ENCODE measurements at regions of chr11 and their contacts with region 1.

Region 1: DNA sequence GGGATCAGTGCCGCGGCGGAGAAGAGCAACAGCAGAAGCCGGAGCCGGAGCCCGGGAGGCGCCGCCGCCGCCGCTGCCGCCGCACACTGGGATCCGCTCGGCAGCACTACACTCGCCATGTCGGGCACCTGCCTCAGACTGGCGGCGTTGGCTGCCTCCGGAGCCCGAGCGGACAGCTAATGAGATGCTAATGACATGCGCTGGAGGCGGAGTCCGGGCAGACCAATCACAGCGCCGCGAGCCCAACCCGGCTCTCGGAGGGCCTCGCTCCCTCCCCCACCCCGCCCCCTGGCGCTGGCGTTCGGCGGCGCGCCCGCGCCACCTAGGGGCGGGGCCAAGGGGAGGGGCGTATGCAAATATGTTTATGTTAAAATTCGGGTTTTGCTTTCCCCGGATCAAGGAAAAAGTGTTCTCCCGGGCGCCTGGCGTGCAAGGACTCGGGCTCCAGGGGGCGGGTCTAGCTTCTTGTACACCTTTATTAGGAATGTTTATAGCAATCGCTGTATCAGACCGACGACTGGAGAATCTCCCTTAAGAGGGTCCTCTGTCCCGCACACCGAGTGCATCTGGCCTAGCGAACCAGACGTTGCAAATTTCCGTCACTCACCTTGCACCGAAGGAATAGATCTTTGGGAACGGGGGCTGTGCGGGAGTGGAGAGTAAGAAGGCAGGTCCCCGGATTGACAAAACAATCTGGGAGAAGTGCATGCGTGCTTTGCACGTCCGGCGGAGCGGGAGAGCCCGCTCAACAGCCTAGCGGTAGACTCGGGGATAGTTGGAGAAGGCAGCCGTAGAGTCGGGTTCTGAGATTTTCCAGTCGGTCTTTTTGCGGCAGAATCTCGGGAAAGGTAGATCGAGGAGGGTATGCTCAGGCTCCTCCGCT is at the start of gene CADM1:
- DNase-seq: peak; percentile 92 to 98 (median 93)
- ATAC-seq: peak; percentile 90
- H3K4me3 ChIP-seq: peak within 1 kb of the TSS; percentile 47 to 72
- H3K27ac ChIP-seq: peak within 1 kb of the TSS; percentile 68 to 81
- H3K4me1 ChIP-seq: peaks cover 0 to 27% of the 10 kb centered on the region in 2 donors
- H3K27me3 ChIP-seq: peaks cover 3 to 83% of the 10 kb centered on the region in 2 donors
- CTCF ChIP-seq: peak; percentile 43 to 56
- polyA plus RNA-seq, gene CADM1: 123 to 190 (median 156) TPM

Region 2: DNA sequence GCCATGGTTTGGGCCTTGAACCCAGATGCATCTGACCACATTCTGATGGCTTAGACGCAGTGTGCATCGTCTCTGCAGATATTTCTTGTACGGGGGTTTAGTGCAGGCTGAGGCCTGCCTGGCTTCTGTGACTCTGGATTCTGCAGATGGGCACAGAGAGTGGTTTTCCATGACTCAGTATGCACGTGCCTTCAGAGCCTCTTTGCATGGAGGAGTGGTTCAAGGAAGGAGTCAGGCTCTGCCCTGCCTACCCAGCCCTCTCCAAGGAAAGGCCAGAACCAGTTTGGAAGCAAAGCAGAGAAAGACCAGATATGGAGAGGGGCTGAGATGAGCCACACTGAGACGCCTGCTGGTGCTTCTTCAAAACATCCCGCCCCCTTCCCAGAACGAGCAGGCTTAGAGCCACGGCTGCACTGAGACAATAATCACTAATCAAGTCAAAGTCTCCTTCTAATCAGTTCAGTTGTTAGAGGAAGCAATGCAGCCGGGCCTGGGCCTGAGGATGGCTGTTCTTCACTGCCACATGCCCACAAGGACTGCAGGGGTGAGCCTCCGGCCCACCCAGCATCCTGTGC is 517.2 kb before region 1 on chr11:
- intact Hi-C with region 1: no loop called
- DNase-seq: no peak
- ATAC-seq: no peak
- H3K4me3 ChIP-seq: no peak overlapping the region
- H3K27ac ChIP-seq: no peak overlapping the region
- H3K4me1 ChIP-seq: no peaks in the 10 kb centered on the region
- H3K27me3 ChIP-seq: no peaks in the 10 kb centered on the region
- CTCF ChIP-seq: no peak

Region 3: DNA sequence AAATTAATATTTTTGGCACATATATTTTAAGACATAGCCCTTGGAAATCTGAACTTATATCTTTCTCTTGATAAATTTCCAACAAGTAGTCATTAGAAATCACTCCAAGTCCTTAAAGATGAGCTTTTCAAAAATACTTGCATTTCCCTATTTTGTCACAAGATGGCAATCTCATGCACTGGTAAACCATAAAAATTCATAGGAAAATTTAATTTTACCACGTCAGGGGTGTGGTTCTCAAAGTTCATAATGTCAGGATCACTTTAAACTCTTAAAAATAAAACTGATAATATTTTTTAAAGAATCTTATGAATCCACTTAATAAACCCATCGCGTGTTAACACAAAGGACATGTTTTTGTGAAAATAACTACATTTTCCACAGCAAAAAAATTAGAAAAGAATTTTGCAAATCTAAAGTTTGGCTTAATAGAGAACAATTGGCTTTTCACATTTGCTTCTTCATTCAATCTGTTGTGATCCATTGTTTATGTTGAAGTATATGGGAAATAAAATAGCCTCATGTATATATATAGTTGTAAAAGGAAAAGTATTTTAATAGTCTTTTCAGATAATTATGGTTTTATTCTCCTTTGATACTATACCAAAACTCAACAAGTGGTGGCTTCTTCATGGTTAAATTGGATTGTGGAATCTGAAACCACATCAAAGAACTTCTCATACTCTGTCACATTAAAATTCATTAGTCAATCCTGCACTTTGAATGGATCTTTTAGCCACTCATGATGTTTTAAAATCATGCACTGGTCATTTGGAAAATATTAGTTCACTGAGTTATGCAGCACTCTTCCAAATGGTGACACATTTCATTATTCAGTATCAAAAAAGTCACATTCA is 169.4 kb before region 1 on chr11:
- intact Hi-C with region 1: loop called in 1 of 2 experiments (anchors 10 kb)
- DNase-seq: peak in 1 of 4 donors; percentile 48
- ATAC-seq: peak; percentile 58
- H3K4me3 ChIP-seq: no peak overlapping the region
- H3K27ac ChIP-seq: no peak overlapping the region
- H3K4me1 ChIP-seq: peaks cover 0 to 3% of the 10 kb centered on the region in 2 donors
- H3K27me3 ChIP-seq: no peaks in the 10 kb centered on the region
- CTCF ChIP-seq: peak; percentile 55 to 76

Measured in left lung (tissue), 14 donors.